Activated B cell treated with CpG ODN at 0.5 μM for 24 hours (primary cell): ENCODE measurements at regions of chr6 and their contacts with region 1.

Region 1: DNA sequence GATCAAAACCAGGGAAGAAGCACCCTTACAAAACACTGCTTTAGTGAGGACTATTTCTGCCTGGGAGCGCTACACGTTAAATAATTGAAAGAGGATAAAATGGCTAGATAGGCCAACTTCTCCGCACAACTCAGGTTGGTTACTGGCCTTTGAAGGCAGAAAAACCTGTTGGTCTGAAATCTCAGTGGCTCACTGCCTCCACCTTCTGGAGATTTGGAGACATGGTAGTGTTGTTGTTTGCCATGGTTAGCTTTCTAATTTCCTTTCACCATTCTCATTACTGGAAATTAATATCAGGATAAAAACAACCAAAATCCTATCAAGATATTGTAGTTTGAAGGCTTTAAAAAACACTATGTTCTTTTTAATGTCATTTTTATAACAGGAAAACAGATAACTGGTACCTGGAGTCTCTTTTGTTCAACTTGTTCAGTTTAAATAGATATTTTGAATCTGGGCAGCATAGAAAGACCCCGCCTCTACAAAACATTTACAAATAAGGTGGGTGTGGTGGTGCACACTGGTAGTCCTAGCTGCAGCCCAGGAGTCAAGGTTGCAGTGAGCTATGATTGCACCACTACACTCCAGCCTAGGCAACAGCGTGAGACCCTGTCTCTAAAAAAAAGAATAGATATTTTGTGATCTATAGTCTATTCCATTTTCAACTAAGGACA is 27.5 kb upstream of the BCLAF1 start:
- DNase-seq: no peak
- ATAC-seq: peak; percentile 71
- H3K4me3 Mint-ChIP-seq: no peak overlapping the region
- H3K27ac Mint-ChIP-seq: no peak overlapping the region
- H3K4me1 Mint-ChIP-seq: no peaks in the 10 kb centered on the region
- H3K27me3 Mint-ChIP-seq: peaks cover 4% of the 10 kb centered on the region
- CTCF ChIP-seq: no peak

Region 2: DNA sequence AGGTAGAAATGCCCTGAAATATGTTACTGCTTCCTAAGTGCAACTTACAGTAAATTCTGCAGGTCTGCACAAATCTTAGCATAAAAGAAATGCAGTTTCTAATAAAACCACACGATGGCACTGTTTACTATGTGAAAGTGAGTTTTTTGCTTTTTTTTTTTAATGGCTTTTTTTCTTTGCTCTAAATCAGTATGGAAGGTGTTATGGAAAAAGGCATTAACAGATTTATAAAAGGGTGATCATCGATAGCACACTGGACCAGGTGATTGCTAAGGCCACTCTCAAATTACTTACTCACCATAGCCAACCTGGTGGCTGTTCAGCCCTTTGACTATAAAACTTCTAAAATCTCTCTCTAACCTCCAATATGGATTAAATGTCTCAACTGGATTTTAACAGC is 865.5 kb before region 1 on chr6:
- CTCF ChIA-PET with region 1: interaction called, 4 read pairs
- POLR2A ChIA-PET with region 1: no interaction called
- intact Hi-C with region 1: loop called (anchors 1 kb)
- DNase-seq: no peak
- ATAC-seq: peak; percentile 45
- H3K4me3 Mint-ChIP-seq: no peak overlapping the region
- H3K27ac Mint-ChIP-seq: no peak overlapping the region
- H3K4me1 Mint-ChIP-seq: peaks cover 8% of the 10 kb centered on the region
- H3K27me3 Mint-ChIP-seq: no peaks in the 10 kb centered on the region
- CTCF ChIP-seq: peak; percentile 54

Region 3: GRCh38 chr6:135506270-135506997 is 810.7 kb before region 1 on chr6:
- CTCF ChIA-PET with region 1: interaction called, 3 read pairs
- POLR2A ChIA-PET with region 1: no interaction called
- intact Hi-C with region 1: loop called (anchors 1 kb)
- DNase-seq: no peak
- ATAC-seq: peak; percentile 62
- H3K4me3 Mint-ChIP-seq: no peak overlapping the region
- H3K27ac Mint-ChIP-seq: no peak overlapping the region
- H3K4me1 Mint-ChIP-seq: peaks cover 2% of the 10 kb centered on the region
- H3K27me3 Mint-ChIP-seq: no peaks in the 10 kb centered on the region
- CTCF ChIP-seq: peak; percentile 35

Region 4: GRCh38 chr6:135535989-135536414 is 781.2 kb before region 1 on chr6:
- CTCF ChIA-PET with region 1: interaction called, 8 read pairs
- POLR2A ChIA-PET with region 1: no interaction called
- intact Hi-C with region 1: loop called (anchors 1 kb)
- DNase-seq: no peak
- ATAC-seq: no peak
- H3K4me3 Mint-ChIP-seq: no peak overlapping the region
- H3K27ac Mint-ChIP-seq: no peak overlapping the region
- H3K4me1 Mint-ChIP-seq: peaks cover 2% of the 10 kb centered on the region
- H3K27me3 Mint-ChIP-seq: peaks cover 13% of the 10 kb centered on the region
- CTCF ChIP-seq: no peak

Region 5: GRCh38 chr6:135675862-135676261 is 641.3 kb before region 1 on chr6:
- CTCF ChIA-PET with region 1: interaction called, 3 read pairs
- POLR2A ChIA-PET with region 1: no interaction called
- intact Hi-C with region 1: loop called (anchors 1 kb)
- DNase-seq: no peak
- ATAC-seq: peak; percentile 70
- H3K4me3 Mint-ChIP-seq: no peak overlapping the region
- H3K27ac Mint-ChIP-seq: no peak overlapping the region
- H3K4me1 Mint-ChIP-seq: no peaks in the 10 kb centered on the region
- H3K27me3 Mint-ChIP-seq: no peaks in the 10 kb centered on the region
- CTCF ChIP-seq: peak; percentile 43

Region 6: GRCh38 chr6:136031982-136032381 is 285.2 kb before region 1 on chr6:
- CTCF ChIA-PET with region 1: no interaction called
- POLR2A ChIA-PET with region 1: no interaction called
- intact Hi-C with region 1: loop called (anchors 10 kb)
- DNase-seq: no peak
- ATAC-seq: no peak
- H3K4me3 Mint-ChIP-seq: no peak overlapping the region
- H3K27ac Mint-ChIP-seq: no peak overlapping the region
- H3K4me1 Mint-ChIP-seq: no peaks in the 10 kb centered on the region
- H3K27me3 Mint-ChIP-seq: no peaks in the 10 kb centered on the region
- CTCF ChIP-seq: no peak

Region 7: DNA sequence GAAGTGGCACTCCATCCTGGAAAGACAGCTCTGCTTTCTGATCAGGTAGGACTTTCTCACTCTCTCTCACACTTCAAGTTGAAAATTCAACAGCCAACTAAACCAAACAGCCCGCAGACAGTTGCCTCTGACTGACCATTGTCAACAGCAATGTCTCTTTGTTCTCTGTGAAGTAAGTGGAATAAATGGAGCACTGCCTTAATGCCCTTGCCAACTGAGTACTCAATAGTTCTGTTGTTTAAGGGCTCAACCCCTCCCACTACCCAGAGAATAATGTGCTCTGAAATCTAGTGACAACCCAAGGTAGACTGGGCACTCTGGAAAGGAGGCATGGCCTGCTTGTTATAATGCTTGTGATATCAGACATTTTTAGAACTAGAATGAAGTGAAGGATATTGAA is 10.7 kb before region 1 on chr6:
- CTCF ChIA-PET with region 1: no interaction called
- POLR2A ChIA-PET with region 1: no interaction called
- intact Hi-C with region 1: no loop called
- DNase-seq: no peak
- ATAC-seq: no peak
- H3K4me3 Mint-ChIP-seq: no peak overlapping the region
- H3K27ac Mint-ChIP-seq: no peak overlapping the region
- H3K4me1 Mint-ChIP-seq: no peaks in the 10 kb centered on the region
- H3K27me3 Mint-ChIP-seq: peaks cover 1% of the 10 kb centered on the region
- CTCF ChIP-seq: no peak